ENCODE measurements at regions of chr2 and their contacts with region 1.

Region 1: DNA sequence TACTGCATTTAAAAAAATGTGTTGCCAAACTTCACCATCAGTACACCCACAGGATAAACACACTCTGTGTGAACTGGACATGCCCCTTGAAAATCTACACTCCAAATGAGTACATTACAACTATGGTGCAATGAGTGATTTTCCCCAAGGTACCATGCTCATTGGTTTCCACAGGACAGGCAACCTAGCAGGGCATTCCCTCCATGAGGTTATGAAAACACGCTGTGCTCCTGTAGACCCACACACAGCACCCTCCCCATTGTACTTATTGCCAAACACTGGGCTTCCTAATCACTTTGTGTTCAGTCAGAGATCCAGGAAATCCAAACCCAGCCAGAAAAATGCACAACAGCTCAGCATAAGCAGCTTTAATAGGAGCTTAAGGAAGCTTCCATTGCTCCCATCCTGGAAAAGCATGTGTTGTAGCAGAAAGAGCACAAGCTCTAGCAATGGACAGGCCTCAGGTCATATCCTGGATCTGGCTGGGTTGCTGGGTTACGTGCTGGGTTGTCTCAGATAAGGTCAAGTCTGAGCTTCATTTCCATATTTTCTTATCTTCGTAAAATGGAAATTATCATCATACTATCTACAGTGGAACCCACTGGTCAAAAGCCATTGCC is 20.8 kb upstream of the ATIC start:
- DNase-seq: no peak
- H3K4me3 ChIP-seq: no peak overlapping the region
- H3K27ac ChIP-seq: no peak overlapping the region
- H3K4me1 ChIP-seq: no peaks in the 10 kb centered on the region
- H3K27me3 ChIP-seq: no peaks in the 10 kb centered on the region
- CTCF ChIP-seq: no peak

Region 2: GRCh38 chr2:214881647-214882202 is 409.4 kb before region 1 on chr2:
- CTCF ChIA-PET with region 1: no interaction called
- POLR2A ChIA-PET with region 1: no interaction called
- intact Hi-C with region 1: no loop called
- DNase-seq: no peak
- H3K4me3 ChIP-seq: no peak overlapping the region
- H3K27ac ChIP-seq: no peak overlapping the region
- H3K4me1 ChIP-seq: no peaks in the 10 kb centered on the region
- H3K27me3 ChIP-seq: no peaks in the 10 kb centered on the region
- CTCF ChIP-seq: no peak

Region 3: DNA sequence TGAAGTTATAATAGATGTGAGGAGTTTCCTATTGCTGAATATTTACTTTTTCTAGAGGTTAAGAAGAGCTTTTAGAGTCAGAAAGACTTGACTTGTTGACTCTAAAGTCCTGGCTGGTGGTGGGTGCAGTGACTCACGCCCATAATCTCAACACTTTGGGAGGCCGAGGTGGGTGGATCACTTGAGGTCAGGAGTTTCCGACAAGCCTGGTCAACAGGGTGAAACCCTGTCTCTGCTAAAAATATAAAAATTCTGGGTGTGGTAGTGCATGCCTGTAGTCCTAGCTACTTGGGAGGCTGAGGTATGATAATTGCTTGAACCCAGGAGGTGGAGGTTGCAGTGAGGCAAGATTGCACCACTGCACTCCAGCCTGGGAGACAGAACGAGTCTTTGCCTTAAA is 13.1 kb before region 1 on chr2:
- CTCF ChIA-PET with region 1: interaction called, 11 read pairs
- POLR2A ChIA-PET with region 1: no interaction called
- intact Hi-C with region 1: no loop called
- DNase-seq: no peak
- H3K4me3 ChIP-seq: no peak overlapping the region
- H3K27ac ChIP-seq: no peak overlapping the region
- H3K4me1 ChIP-seq: no peaks in the 10 kb centered on the region
- H3K27me3 ChIP-seq: no peaks in the 10 kb centered on the region
- CTCF ChIP-seq: no peak

Region 4: GRCh38 chr2:215301994-215302393 is 10.9 kb after region 1 on chr2:
- CTCF ChIA-PET with region 1: no interaction called
- POLR2A ChIA-PET with region 1: no interaction called
- intact Hi-C with region 1: no loop called
- DNase-seq: no peak
- H3K4me3 ChIP-seq: no peak overlapping the region
- H3K27ac ChIP-seq: no peak overlapping the region
- H3K4me1 ChIP-seq: no peaks in the 10 kb centered on the region
- H3K27me3 ChIP-seq: no peaks in the 10 kb centered on the region
- CTCF ChIP-seq: no peak